ENCODE measurements at regions of chr11 and their contacts with region 1.

Region 1: GRCh38 chr11:9962722-9963121 is 298.8 kb downstream of the SWAP70 start:
- DNase-seq: no peak
- ATAC-seq: no peak
- H3K4me3 ChIP-seq: no peak overlapping the region
- H3K27ac ChIP-seq: no peak overlapping the region
- H3K4me1 ChIP-seq: no peaks in the 10 kb centered on the region
- H3K27me3 ChIP-seq: no peaks in the 10 kb centered on the region
- CTCF ChIP-seq: no peak

Region 2: DNA sequence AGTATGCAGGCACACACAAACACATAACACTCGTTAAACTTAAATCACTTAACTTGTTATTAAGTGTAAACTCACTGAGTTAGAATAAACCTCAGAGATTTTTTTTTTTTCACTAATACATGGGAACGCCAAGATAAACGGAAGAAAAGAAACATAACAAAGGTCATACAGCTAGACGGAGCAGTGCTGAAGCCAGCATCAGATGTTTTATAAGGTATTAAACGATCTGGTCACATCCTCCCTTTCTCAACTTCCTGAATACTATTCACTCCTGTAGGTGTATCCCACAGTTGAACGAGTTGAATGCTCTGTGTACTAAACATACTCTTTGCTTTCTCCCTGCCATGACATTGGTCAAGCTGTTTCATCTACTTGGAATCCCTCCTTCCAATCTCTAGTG is 86.9 kb before region 1 on chr11:
- intact Hi-C with region 1: loop called in 1 of 10 experiments (anchors 10 kb)
- DNase-seq: no peak
- ATAC-seq: no peak
- H3K4me3 ChIP-seq: no peak overlapping the region
- H3K27ac ChIP-seq: no peak overlapping the region
- H3K4me1 ChIP-seq: no peaks in the 10 kb centered on the region
- H3K27me3 ChIP-seq: no peaks in the 10 kb centered on the region
- CTCF ChIP-seq: no peak

Region 3: DNA sequence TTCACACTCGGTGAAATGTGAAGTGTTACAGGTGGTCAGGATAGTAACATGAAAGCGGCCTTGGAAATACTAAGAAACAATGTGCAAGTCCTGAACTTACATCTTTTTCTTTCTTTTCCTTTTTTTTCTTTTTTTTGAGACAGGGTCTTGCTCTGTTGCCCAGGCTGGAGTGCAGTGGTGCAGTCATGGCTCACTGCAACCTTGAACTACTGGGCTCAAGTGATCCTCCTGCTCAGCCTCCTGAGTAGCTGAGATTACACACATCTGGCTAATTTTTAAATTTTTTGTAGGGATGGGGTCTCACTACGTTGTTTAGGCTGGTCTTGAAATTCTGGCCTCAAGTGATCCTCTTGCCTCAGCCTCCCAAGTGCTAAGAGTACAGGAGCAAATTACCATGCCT is 46.2 kb before region 1 on chr11:
- intact Hi-C with region 1: loop called in 1 of 10 experiments (anchors 2 kb)
- DNase-seq: no peak
- ATAC-seq: no peak
- H3K4me3 ChIP-seq: no peak overlapping the region
- H3K27ac ChIP-seq: no peak overlapping the region
- H3K4me1 ChIP-seq: no peaks in the 10 kb centered on the region
- H3K27me3 ChIP-seq: no peaks in the 10 kb centered on the region
- CTCF ChIP-seq: no peak

Region 4: GRCh38 chr11:10225553-10225952 is 262.8 kb after region 1 on chr11:
- intact Hi-C with region 1: no loop called
- DNase-seq: no peak
- ATAC-seq: peak in 1 of 8 donors; percentile 61
- H3K4me3 ChIP-seq: no peak overlapping the region
- H3K27ac ChIP-seq: no peak overlapping the region
- H3K4me1 ChIP-seq: peaks cover 0 to 19% (median 0%) of the 10 kb centered on the region in 9 donors
- H3K27me3 ChIP-seq: no peaks in the 10 kb centered on the region
- CTCF ChIP-seq: no peak

Measured in heart right ventricle (tissue), 16 donors.